B cell (primary cell): ENCODE measurements at regions of chr19 and their contacts with region 1.

Region 1: GRCh38 chr19:19663256-19664038 is at the start of gene ATP13A1:
- DNase-seq: peak; percentile 99
- ATAC-seq: peak; percentile 79
- H3K4me3 ChIP-seq: peak within 1 kb of the TSS; percentile 75 to 88 (median 77)
- H3K4me3 Mint-ChIP-seq: peak within 1 kb of the TSS; percentile 93
- H3K27ac ChIP-seq: peak within 1 kb of the TSS; percentile 77 to 97
- H3K27ac Mint-ChIP-seq: peak within 1 kb of the TSS; percentile 98
- H3K4me1 ChIP-seq: peaks cover 39 to 60% of the 10 kb centered on the region in 2 donors
- H3K4me1 Mint-ChIP-seq: peaks cover 40% of the 10 kb centered on the region
- H3K27me3 ChIP-seq: no peaks in the 10 kb centered on the region
- H3K27me3 Mint-ChIP-seq: no peaks in the 10 kb centered on the region
- CTCF ChIP-seq: peak; percentile 22
- total RNA-seq, gene ATP13A1: 153 and 156 TPM in 2 replicates

Region 2: DNA sequence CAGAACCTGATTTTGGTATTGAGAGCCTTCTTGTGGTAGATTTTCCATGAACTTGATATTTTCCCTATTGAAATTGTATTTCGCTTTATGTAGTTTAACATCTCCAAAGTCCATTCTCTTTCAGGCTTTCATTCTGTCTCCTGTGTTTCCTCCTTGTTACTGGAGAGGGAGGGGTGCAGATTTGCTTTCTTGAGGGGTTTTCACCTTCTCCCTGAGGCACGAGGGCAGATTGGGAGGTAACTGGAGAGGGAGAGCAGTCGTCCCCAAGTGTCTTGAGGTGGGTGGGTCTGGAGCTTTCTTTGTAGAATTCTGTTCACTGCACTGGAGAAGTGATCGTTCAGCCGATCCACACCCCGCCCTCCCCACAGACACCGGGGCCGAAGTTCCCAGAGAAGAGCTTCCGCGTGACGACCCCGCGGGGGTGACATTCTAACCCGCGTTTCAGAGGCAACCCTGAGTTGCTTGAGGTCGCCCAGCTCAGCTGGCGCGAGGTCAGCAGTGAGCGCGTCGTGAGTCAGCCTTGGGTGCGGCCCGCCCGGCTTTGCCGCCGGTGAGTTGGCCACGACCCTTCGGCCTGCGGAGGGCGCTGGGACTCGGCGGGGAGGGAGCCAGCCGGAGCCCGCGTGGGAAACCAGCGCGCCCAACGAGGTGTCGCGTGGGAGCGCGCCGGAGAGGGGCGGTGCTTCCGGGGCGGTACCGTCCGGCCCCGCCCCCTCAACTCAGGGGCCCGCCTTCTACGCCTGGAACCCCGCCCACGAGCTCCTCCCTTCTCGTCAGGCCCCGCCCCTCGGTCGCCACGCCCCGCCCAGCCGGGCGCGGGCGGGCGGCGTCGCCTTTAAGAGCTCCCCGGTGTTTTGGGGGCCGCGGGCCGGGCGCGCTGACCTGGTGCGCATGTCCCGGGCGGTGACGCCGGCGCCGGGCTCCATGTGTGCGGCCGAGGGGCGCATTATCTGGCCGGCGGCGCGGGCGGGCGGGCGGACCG is 258.3 kb before region 1 on chr19 and contains the start of gene GATAD2A:
- CTCF ChIA-PET with region 1: no interaction called
- POLR2A ChIA-PET with region 1: no interaction called
- intact Hi-C with region 1: loop called (anchors 1 kb)
- DNase-seq: peak; percentile 96
- ATAC-seq: peak; percentile 88
- H3K4me3 ChIP-seq: peak within 1 kb of the TSS; percentile 55 to 86 (median 70)
- H3K4me3 Mint-ChIP-seq: peak within 1 kb of the TSS; percentile 91
- H3K27ac ChIP-seq: peak within 1 kb of the TSS; percentile 55 to 77
- H3K27ac Mint-ChIP-seq: peak within 1 kb of the TSS; percentile 92
- H3K4me1 ChIP-seq: peaks cover 32 to 37% of the 10 kb centered on the region in 2 donors
- H3K4me1 Mint-ChIP-seq: peaks cover 39% of the 10 kb centered on the region
- H3K27me3 ChIP-seq: no peaks in the 10 kb centered on the region
- H3K27me3 Mint-ChIP-seq: no peaks in the 10 kb centered on the region
- CTCF ChIP-seq: peak; percentile 38
- total RNA-seq, gene GATAD2A: 76.3 and 97.3 TPM in 2 replicates

Region 3: DNA sequence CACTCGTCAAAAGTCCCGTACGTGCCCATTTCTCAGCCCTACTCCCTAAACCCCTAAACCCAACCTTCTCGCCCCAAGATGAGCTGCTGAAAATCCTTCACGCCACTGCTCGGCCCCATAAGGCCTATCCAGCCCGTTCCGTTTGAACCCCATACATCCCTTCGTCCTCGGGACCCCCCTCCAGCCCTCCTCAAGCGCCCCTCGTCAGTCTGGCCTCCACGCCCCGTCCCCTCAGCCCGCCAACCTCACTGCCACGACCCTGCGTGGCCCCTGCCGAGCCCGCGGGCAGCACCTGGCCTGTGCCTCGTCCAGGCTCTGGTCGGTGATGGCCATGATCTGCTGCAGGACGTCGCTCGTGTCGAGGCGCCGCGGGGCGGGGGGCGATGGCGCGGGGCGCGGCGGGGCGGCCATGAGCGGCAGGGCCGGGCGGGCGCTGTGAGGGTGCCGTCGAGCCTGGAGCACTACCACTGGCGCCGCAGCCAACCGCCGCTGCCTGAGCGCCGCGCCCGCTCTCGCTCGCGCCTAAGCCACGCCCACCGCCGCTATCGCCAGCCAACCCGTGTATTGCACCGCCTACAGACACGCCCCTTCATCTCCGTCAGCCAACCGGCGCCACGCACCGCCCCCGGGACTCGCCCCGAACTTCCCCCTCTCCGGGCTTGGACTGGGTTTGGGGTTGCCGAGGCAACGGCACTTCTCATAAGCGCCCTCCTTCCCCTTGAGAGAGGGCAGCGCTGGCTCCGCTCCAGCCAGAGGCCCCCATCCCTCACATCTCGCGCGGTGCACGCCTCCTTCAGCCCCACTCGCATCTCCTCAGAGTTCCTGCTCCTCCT is 45.0 kb before region 1 on chr19 and contains the start of gene PBX4:
- CTCF ChIA-PET with region 1: no interaction called
- POLR2A ChIA-PET with region 1: interaction called, 7 read pairs
- intact Hi-C with region 1: loop called (anchors 1 kb)
- DNase-seq: peak; percentile 99
- ATAC-seq: peak; percentile 99
- H3K4me3 ChIP-seq: peak within 1 kb of the TSS in 4 of 5 experiments; percentile 48 to 64 (median 56)
- H3K4me3 Mint-ChIP-seq: peak within 1 kb of the TSS; percentile 89
- H3K27ac ChIP-seq: peak within 1 kb of the TSS; percentile 51 to 70
- H3K27ac Mint-ChIP-seq: peak within 1 kb of the TSS; percentile 89
- H3K4me1 ChIP-seq: peaks cover 11 to 16% of the 10 kb centered on the region in 2 donors
- H3K4me1 Mint-ChIP-seq: peaks cover 24% of the 10 kb centered on the region
- H3K27me3 ChIP-seq: no peaks in the 10 kb centered on the region
- H3K27me3 Mint-ChIP-seq: no peaks in the 10 kb centered on the region
- CTCF ChIP-seq: no peak
- total RNA-seq, gene PBX4: 11.7 and 11.8 TPM in 2 replicates

Region 4: GRCh38 chr19:19643158-19644053 is 20.0 kb before region 1 on chr19 and contains the start of gene GMIP:
- CTCF ChIA-PET with region 1: interaction called, 10 read pairs
- POLR2A ChIA-PET with region 1: interaction called, 22 read pairs
- intact Hi-C with region 1: loop called (anchors 1 kb)
- DNase-seq: peak; percentile 93
- ATAC-seq: peak; percentile 90
- H3K4me3 ChIP-seq: peak within 1 kb of the TSS; percentile 92 to 100 (median 95)
- H3K4me3 Mint-ChIP-seq: peak within 1 kb of the TSS; percentile 99
- H3K27ac ChIP-seq: peak within 1 kb of the TSS; percentile 95 to 98
- H3K27ac Mint-ChIP-seq: peak within 1 kb of the TSS; percentile 98
- H3K4me1 ChIP-seq: peaks cover 17 to 21% of the 10 kb centered on the region in 2 donors
- H3K4me1 Mint-ChIP-seq: peaks cover 18% of the 10 kb centered on the region
- H3K27me3 ChIP-seq: no peaks in the 10 kb centered on the region
- H3K27me3 Mint-ChIP-seq: no peaks in the 10 kb centered on the region
- CTCF ChIP-seq: peak; percentile 81
- total RNA-seq, gene GMIP: 112 and 114 TPM in 2 replicates

Region 5: DNA sequence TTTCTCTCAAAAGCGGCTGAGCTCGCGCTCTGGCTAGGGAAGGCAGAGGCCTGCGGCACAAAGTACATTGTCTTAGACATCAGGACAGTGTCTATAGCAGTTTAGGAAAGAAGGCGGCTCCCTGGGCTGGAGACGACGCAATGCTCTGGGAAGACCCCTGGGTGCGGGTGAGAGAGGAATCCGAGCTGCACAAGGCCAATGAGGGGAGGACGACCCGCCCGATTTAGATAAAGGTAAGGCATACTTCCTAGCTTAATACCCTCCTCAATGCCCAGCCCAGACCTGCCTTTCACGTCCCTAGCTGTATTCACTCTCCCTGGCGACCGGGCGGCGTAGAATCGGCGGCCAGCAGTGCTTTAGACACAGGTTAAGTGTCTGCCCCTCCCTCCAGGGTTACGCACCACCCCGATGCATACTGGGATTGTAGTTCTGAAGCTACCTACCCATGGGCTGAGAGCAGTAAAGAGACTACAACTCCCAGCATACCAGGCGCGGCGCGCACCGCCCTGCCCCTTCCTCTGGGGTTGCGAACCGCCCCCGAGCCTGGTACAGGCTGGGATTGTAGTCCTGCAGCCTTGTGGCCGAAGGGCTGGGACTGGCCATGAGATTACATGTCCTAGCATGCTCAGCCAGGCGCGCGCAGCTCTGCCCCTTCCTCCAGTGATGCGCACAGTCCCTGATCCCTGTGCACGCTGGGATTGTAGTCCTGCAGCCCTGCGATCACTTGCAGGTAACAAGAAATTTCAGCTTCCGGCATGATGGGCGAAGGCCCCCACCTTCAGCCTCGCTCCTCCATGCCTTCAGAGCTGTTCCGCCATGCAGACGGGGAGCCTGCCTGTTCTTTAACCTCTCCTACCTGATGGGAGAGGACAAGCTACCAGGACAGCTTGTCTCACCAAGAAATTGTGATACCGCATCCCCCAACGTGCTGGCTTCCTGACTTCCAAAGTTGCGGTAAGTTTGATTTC is 112.9 kb after region 1 on chr19:
- CTCF ChIA-PET with region 1: interaction called, 7 read pairs
- POLR2A ChIA-PET with region 1: interaction called, 17 read pairs
- intact Hi-C with region 1: loop called (anchors 1 kb)
- DNase-seq: peak; percentile 94
- ATAC-seq: peak; percentile 99
- H3K4me3 ChIP-seq: peak overlapping the region; percentile 71 to 94 (median 90)
- H3K4me3 Mint-ChIP-seq: peak overlapping the region; percentile 97
- H3K27ac ChIP-seq: peak overlapping the region; percentile 8 to 78
- H3K27ac Mint-ChIP-seq: peak overlapping the region; percentile 91
- H3K4me1 ChIP-seq: peaks cover 17 to 24% of the 10 kb centered on the region in 2 donors
- H3K4me1 Mint-ChIP-seq: peaks cover 35% of the 10 kb centered on the region
- H3K27me3 ChIP-seq: no peaks in the 10 kb centered on the region
- H3K27me3 Mint-ChIP-seq: no peaks in the 10 kb centered on the region
- CTCF ChIP-seq: no peak

Region 6: DNA sequence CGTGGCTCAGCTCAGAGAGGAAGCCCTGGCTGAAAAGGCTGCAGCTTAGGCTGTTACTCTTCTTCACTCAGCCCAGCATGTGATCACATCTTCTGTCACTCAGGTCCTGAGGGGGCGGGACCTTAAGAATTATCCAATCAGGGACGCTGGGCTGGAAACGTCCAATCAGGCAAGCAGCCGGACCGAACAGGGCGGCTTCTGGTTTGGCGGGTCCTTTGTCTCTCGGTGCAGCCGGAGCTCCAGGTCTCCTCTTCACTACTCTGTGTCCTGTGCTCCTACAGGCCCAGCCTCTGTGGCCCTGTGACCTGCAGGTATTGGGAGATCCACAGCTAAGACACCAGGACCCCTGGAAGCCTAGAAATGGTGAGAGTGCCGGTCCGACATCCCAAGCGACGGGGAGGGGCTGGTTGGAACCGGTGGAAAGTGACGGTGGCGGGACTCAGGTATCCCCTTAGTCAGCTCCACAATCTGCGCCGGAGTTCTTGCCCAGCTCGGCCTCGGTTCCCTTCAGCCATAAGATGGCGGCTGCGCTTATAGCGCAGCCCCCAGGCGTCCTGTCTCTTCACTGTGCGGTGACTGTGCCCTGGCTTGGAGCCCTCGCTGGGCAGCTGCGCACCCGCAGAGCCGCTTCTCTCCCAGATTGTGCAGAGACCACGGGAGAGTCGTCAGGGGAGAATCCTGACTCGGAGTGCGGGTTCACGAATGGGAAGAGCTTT is 237.4 kb after region 1 on chr19 and contains the start of gene ZNF93:
- CTCF ChIA-PET with region 1: no interaction called
- POLR2A ChIA-PET with region 1: interaction called, 3 read pairs
- intact Hi-C with region 1: loop called (anchors 1 kb)
- DNase-seq: peak; percentile 94
- ATAC-seq: peak; percentile 98
- H3K4me3 ChIP-seq: peak within 1 kb of the TSS; percentile 85 to 94 (median 87)
- H3K4me3 Mint-ChIP-seq: peak within 1 kb of the TSS; percentile 98
- H3K27ac ChIP-seq: peak within 1 kb of the TSS; percentile 71 to 74
- H3K27ac Mint-ChIP-seq: peak within 1 kb of the TSS; percentile 91
- H3K4me1 ChIP-seq: peaks cover 6 to 16% of the 10 kb centered on the region in 2 donors
- H3K4me1 Mint-ChIP-seq: peaks cover 41% of the 10 kb centered on the region
- H3K27me3 ChIP-seq: no peaks in the 10 kb centered on the region
- H3K27me3 Mint-ChIP-seq: no peaks in the 10 kb centered on the region
- CTCF ChIP-seq: no peak
- total RNA-seq, gene ZNF93: 12.5 and 13.3 TPM in 2 replicates